Activated B cell treated with CpG ODN at 0.5 μM for 24 hours (primary cell): ENCODE measurements at regions of chr5 and their contacts with region 1.

Region 1: GRCh38 chr5:42950440-42951292 is 89.5 kb downstream of the ANXA2R start:
- DNase-seq: no peak
- ATAC-seq: peak; percentile 48
- H3K4me3 Mint-ChIP-seq: peak overlapping the region; percentile 94
- H3K27ac Mint-ChIP-seq: peak overlapping the region; percentile 98
- H3K4me1 Mint-ChIP-seq: peaks cover 33% of the 10 kb centered on the region
- H3K27me3 Mint-ChIP-seq: no peaks in the 10 kb centered on the region
- CTCF ChIP-seq: no peak

Region 2: GRCh38 chr5:42628821-42629220 is 321.8 kb before region 1 on chr5:
- CTCF ChIA-PET with region 1: no interaction called
- POLR2A ChIA-PET with region 1: no interaction called
- intact Hi-C with region 1: no loop called
- DNase-seq: no peak
- ATAC-seq: no peak
- H3K4me3 Mint-ChIP-seq: no peak overlapping the region
- H3K27ac Mint-ChIP-seq: no peak overlapping the region
- H3K4me1 Mint-ChIP-seq: peaks cover 14% of the 10 kb centered on the region
- H3K27me3 Mint-ChIP-seq: no peaks in the 10 kb centered on the region
- CTCF ChIP-seq: no peak

Region 3: DNA sequence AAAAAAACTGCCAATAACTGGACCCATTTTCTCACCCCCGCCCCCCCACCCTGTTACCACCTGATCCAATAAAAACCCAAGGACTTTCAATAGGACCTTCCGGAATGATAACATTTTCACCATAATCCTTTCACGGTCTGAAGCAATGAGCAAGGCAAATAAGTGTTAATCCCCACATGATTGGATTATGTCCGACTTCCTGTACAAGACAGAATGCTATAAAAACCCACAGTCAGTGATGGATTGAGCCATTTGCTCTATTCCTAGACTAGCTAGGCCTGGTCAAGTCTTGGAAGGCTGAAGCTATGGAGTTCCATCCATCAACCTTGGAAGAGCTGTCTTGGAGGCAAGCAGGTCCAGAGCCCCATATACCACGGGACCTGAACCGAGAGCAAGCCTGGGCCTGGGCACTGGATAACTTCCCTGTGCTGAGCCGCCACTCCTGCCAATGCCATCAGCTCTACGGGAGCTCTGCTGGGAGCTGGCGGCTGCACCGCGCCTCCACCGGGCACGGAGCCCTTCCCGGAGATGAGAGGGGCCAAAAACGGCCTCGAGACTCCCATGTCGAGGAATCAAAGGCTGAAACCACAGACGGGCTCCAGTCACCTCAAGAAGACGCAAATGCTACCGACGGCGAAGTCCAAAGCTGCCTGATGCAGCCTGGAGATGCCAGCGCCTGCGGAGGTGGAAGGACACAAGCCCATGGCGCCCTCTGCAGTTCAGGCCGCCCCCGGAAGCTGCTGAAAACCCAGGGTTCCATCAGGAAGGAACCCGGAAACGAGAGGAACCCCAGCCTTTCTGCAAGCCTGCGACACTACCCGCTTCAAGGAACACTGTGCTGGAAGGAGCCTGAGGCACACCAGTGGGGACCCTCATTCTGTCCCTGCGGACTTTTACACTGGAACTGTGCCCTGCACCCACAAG is 20.2 kb after region 1 on chr5:
- CTCF ChIA-PET with region 1: no interaction called
- POLR2A ChIA-PET with region 1: no interaction called
- intact Hi-C with region 1: no loop called
- DNase-seq: no peak
- ATAC-seq: no peak
- H3K4me3 Mint-ChIP-seq: no peak overlapping the region
- H3K27ac Mint-ChIP-seq: no peak overlapping the region
- H3K4me1 Mint-ChIP-seq: no peaks in the 10 kb centered on the region
- H3K27me3 Mint-ChIP-seq: no peaks in the 10 kb centered on the region
- CTCF ChIP-seq: no peak

Region 4: GRCh38 chr5:43008369-43009153 is 57.9 kb after region 1 on chr5:
- CTCF ChIA-PET with region 1: interaction called, 11 read pairs
- POLR2A ChIA-PET with region 1: interaction called, 97 read pairs
- intact Hi-C with region 1: loop called (anchors 1 kb)
- DNase-seq: peak; percentile 77
- ATAC-seq: peak; percentile 53
- H3K4me3 Mint-ChIP-seq: peak overlapping the region; percentile 89
- H3K27ac Mint-ChIP-seq: peak overlapping the region; percentile 98
- H3K4me1 Mint-ChIP-seq: peaks cover 31% of the 10 kb centered on the region
- H3K27me3 Mint-ChIP-seq: no peaks in the 10 kb centered on the region
- CTCF ChIP-seq: no peak

Region 5: DNA sequence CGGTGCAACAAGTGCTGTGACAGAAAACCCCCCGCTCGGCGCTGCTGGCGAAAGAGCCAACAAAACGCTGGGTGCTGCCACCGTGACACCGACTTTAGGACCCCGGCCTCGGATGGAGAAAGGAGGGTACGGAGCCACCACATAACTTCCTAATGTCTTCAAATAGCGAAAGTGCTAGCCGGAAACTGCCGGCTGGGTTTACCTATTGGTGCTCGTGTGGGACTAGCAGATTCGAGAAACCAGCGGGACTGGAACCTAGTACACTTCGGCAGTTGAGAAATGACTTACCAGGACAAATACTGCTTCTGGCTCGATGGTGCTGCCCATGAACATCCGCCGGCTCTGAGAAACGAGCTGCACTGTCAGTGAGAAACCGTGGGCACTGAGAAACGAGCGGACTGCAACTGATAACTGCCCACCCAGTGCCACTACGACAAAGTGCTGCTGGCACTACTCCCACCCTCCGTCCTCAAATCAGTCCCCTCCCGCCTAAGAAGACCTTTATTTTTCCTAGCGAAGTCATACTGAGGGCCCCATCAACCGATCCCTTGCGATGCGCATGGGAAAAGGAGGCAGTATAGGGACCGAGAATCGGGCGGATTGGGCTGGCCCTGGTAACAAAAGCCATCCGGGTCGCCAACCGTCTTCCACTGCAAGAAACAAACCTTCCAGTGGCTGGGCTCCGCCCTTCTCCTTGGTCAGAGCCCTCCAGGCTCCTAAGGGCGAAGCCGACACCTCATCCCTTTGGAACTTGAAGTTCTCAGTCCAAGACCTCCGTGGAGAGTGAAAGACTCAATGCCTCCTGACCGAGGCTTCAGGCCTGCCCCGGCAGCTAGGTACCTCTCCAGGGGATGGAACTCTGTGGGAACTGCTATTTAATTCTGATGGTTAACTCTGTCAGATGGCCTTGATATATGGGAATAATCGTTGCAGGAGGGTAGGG is 116.4 kb after region 1 on chr5:
- CTCF ChIA-PET with region 1: interaction called, 3 read pairs
- POLR2A ChIA-PET with region 1: interaction called, 45 read pairs
- intact Hi-C with region 1: loop called (anchors 1 kb)
- DNase-seq: peak; percentile 83
- ATAC-seq: peak; percentile 55
- H3K4me3 Mint-ChIP-seq: peak overlapping the region; percentile 95
- H3K27ac Mint-ChIP-seq: peak overlapping the region; percentile 99
- H3K4me1 Mint-ChIP-seq: peaks cover 40% of the 10 kb centered on the region
- H3K27me3 Mint-ChIP-seq: no peaks in the 10 kb centered on the region
- CTCF ChIP-seq: no peak

Region 6: GRCh38 chr5:43191740-43192557 is 241.3 kb after region 1 on chr5 and contains the start of gene NIM1K:
- CTCF ChIA-PET with region 1: no interaction called
- POLR2A ChIA-PET with region 1: no interaction called
- intact Hi-C with region 1: loop called (anchors 5 kb)
- DNase-seq: peak; percentile 45
- ATAC-seq: peak; percentile 65
- H3K4me3 Mint-ChIP-seq: peak within 1 kb of the TSS; percentile 84
- H3K27ac Mint-ChIP-seq: no peak within 1 kb of the TSS
- H3K4me1 Mint-ChIP-seq: peaks cover 28% of the 10 kb centered on the region
- H3K27me3 Mint-ChIP-seq: peaks cover 19% of the 10 kb centered on the region
- CTCF ChIP-seq: no peak
- total RNA-seq, gene NIM1K: 0.39 and 0.51 TPM in 2 replicates

Region 7: DNA sequence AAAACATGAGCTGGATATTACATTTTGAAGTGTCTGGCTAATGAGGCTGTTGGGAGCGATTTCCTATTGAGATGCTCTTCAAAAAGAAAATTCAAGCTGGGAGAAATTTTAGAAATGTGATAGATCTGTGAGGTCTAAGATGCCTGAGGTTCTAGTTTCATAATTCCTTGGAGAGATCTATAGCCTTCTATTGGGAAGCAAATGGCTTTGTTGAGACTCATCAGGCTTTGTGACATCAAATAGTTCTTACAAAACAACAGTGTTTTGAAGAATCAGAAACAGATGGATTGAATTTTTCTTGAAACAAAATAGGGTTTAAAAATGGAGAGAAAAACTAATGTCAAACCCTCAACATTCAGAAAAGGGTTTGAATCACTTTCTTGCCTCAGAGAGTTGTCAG is 945.2 kb after region 1 on chr5:
- CTCF ChIA-PET with region 1: no interaction called
- POLR2A ChIA-PET with region 1: no interaction called
- intact Hi-C with region 1: no loop called
- DNase-seq: no peak
- ATAC-seq: no peak
- H3K4me3 Mint-ChIP-seq: no peak overlapping the region
- H3K27ac Mint-ChIP-seq: no peak overlapping the region
- H3K4me1 Mint-ChIP-seq: no peaks in the 10 kb centered on the region
- H3K27me3 Mint-ChIP-seq: no peaks in the 10 kb centered on the region
- CTCF ChIP-seq: no peak